Naive thymus-derived CD4-positive, alpha-beta T cell (primary cell): ENCODE measurements at regions of chr1 and their contacts with region 1.

Region 1: DNA sequence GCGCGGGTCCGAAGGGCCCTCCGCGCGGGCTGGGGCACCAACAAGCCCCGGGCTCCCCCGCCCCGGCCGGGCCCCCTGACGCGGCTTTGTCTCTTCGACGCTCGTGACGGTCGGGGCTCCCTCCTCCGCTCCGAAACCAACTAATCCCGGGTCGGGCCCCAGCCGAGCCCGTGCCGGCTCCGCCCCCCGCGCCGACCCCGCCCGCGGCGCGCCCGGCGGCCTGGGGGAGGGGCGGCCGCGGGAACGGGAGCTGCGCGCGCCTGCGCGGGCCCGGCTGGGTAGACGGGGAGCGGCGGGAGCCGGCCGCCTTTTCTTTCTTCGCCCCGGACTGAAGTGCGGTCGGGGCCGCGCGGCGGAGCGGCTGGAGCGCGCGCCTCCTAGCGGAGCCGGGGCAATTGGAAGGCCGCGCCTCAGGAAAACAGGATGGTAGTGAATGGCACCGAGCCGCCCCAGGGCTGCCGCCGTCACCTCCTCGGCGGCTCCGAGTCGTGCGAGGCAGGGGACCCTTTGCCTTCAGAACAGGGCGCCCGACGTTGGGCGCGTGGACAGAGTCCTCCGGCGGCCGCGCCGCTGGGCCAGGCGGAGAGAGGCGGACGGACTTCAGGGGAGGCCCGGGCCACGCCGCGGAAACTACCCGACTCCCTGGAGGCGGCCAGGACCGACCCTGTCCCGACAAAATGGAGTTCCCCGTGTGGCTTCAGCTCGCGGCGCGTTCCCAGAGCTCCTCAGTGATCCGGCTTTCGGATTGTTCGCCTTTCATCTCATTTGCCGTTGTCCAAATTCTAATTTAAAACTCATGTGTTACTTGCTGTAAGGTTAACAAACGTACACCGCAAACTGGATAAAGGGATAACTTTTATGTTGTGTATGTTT is at the start of gene TP53BP2:
- DNase-seq: peak; percentile 86 to 95 (median 90)
- ATAC-seq: peak; percentile 92
- H3K4me3 ChIP-seq: peak within 1 kb of the TSS; percentile 84
- H3K4me3 Mint-ChIP-seq: peak within 1 kb of the TSS; percentile 88 to 99 (median 96)
- H3K27ac ChIP-seq: peak within 1 kb of the TSS; percentile 99
- H3K27ac Mint-ChIP-seq: peak within 1 kb of the TSS; percentile 94 to 99 (median 98)
- H3K4me1 ChIP-seq: peaks cover 14 to 27% of the 10 kb centered on the region in 2 donors
- H3K4me1 Mint-ChIP-seq: peaks cover 23 to 53% (median 40%) of the 10 kb centered on the region in 7 donors
- H3K27me3 ChIP-seq: no peaks in the 10 kb centered on the region
- H3K27me3 Mint-ChIP-seq: peaks cover 0 to 4% (median under 1%) of the 10 kb centered on the region in 5 donors
- total RNA-seq, gene TP53BP2: 30.3 to 120 (median 45.4) TPM

Region 2: GRCh38 chr1:222643938-222644635 is 1202.0 kb before region 1 on chr1:
- CTCF ChIA-PET with region 1: no interaction called
- POLR2A ChIA-PET with region 1: no interaction called
- intact Hi-C with region 1: loop called in 1 of 2 experiments (anchors 5 kb)
- DNase-seq: peak; percentile 93 to 98 (median 96)
- ATAC-seq: peak; percentile 97
- H3K4me3 ChIP-seq: peak overlapping the region; percentile 99
- H3K4me3 Mint-ChIP-seq: peak overlapping the region; percentile 87 to 99 (median 97)
- H3K27ac ChIP-seq: peak overlapping the region; percentile 92
- H3K27ac Mint-ChIP-seq: peak overlapping the region; percentile 95 to 99 (median 98)
- H3K4me1 ChIP-seq: peaks cover 12% of the 10 kb centered on the region in 2 donors
- H3K4me1 Mint-ChIP-seq: peaks cover 12 to 59% (median 49%) of the 10 kb centered on the region in 7 donors
- H3K27me3 ChIP-seq: no peaks in the 10 kb centered on the region
- H3K27me3 Mint-ChIP-seq: no peaks in the 10 kb centered on the region

Region 3: GRCh38 chr1:223695941-223696340 is 150.1 kb before region 1 on chr1:
- CTCF ChIA-PET with region 1: interaction called, 4 read pairs
- POLR2A ChIA-PET with region 1: interaction called, 4 read pairs
- intact Hi-C with region 1: loop called in 1 of 2 experiments (anchors 5 kb)
- DNase-seq: no peak
- ATAC-seq: no peak
- H3K4me3 ChIP-seq: no peak overlapping the region
- H3K4me3 Mint-ChIP-seq: no peak overlapping the region
- H3K27ac ChIP-seq: no peak overlapping the region
- H3K27ac Mint-ChIP-seq: no peak overlapping the region
- H3K4me1 ChIP-seq: no peaks in the 10 kb centered on the region
- H3K4me1 Mint-ChIP-seq: peaks cover 0 to 11% (median 6%) of the 10 kb centered on the region in 7 donors
- H3K27me3 ChIP-seq: no peaks in the 10 kb centered on the region
- H3K27me3 Mint-ChIP-seq: peaks cover 0 to 5% (median 0%) of the 10 kb centered on the region in 5 donors

Region 4: DNA sequence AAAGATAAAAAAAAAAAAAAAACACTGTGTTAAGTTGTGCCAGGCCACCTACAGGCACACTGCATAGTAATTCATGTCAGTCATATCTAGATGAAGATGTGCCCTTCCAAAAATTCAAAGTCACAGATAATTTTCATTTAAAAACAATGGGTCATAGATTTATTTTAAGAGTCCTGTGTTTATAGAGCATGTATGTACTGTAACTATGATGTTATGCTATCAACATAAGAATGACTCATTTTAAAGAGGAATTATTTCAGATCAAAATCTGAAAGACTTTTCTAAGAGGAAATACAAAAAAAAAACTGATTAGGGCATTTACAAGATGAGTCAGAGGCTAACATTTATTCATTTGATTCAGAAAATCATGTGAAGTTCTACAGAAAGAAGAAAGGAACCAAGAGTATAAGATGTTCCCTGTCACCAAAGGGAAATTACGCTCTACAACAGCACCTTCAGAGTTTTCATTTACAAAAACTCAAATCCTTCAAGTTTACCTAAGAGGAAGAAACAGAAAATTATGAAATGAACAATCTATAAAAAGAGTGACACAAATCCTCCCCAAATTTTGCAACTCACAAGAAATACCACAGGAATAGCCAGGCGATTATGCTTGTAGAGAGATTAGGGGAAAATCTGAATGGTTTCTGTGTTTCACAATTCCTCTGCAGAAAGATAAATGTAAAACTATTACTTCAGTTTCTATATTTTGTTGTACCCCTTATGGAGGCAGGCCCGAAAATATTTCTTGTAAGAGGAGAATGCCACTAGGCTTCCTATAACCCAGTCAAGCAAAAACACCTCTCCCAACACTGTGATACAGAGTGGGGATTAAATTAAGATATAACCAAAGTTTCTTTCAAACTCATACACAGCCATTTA is 14.1 kb before region 1 on chr1:
- CTCF ChIA-PET with region 1: interaction called, 8 read pairs
- POLR2A ChIA-PET with region 1: interaction called, 51 read pairs
- intact Hi-C with region 1: loop called (anchors 1 kb)
- DNase-seq: peak in 1 of 9 donors; percentile 36
- ATAC-seq: peak; percentile 77
- H3K4me3 ChIP-seq: no peak overlapping the region
- H3K4me3 Mint-ChIP-seq: peak overlapping the region in 9 of 10 donors; percentile 16 to 69 (median 60)
- H3K27ac ChIP-seq: peak overlapping the region; percentile 11
- H3K27ac Mint-ChIP-seq: peak overlapping the region in 6 of 9 donors; percentile 76 to 93 (median 82)
- H3K4me1 ChIP-seq: peaks cover 46 to 47% of the 10 kb centered on the region in 2 donors
- H3K4me1 Mint-ChIP-seq: peaks cover 12 to 28% (median 22%) of the 10 kb centered on the region in 7 donors
- H3K27me3 ChIP-seq: no peaks in the 10 kb centered on the region
- H3K27me3 Mint-ChIP-seq: no peaks in the 10 kb centered on the region

Region 5: GRCh38 chr1:224182866-224183590 is 337.0 kb after region 1 on chr1 and contains the start of gene DEGS1:
- CTCF ChIA-PET with region 1: no interaction called
- POLR2A ChIA-PET with region 1: no interaction called
- intact Hi-C with region 1: loop called (anchors 2 to 5 kb)
- DNase-seq: peak; percentile 77 to 86 (median 84)
- ATAC-seq: peak; percentile 91
- H3K4me3 ChIP-seq: peak within 1 kb of the TSS; percentile 76
- H3K4me3 Mint-ChIP-seq: peak within 1 kb of the TSS; percentile 78 to 95 (median 90)
- H3K27ac ChIP-seq: peak within 1 kb of the TSS; percentile 92
- H3K27ac Mint-ChIP-seq: peak within 1 kb of the TSS; percentile 90 to 96 (median 93)
- H3K4me1 ChIP-seq: peaks cover 20 to 28% of the 10 kb centered on the region in 2 donors
- H3K4me1 Mint-ChIP-seq: peaks cover 35 to 56% (median 53%) of the 10 kb centered on the region in 7 donors
- H3K27me3 ChIP-seq: no peaks in the 10 kb centered on the region
- H3K27me3 Mint-ChIP-seq: no peaks in the 10 kb centered on the region
- total RNA-seq, gene DEGS1: 35.4 to 86.0 (median 38.3) TPM

Region 6: DNA sequence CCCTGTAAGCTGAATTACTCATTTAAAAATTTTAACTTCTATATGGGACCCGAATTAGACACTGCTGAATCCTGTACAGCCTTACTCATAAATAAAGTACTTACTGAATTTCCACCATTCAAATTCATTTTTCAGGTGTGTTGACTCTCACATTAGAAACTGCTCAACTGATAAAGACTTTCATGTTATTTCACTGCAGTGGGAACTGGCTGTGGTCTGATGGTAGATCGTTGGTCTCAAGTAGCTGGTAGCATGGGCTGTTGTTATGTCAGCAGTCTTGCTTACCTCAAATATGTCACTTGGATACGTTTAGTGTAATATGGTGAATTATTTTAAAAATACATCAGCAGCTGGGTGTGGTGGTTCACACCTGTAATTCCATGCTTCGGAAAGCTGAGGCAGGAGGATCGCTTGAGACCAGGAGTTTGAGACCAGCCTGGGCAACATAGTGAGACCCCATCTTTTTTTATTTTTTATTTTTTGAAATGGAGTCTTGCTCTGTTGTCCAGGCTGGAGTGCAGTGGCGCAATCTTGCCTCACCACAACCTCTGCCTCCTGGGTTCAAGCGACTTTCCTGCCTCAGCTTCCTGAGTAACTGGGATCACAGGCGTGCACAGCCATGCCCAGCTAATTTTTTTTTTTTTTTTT is 347.4 kb after region 1 on chr1:
- CTCF ChIA-PET with region 1: no interaction called
- POLR2A ChIA-PET with region 1: no interaction called
- intact Hi-C with region 1: no loop called
- DNase-seq: no peak
- ATAC-seq: no peak
- H3K4me3 ChIP-seq: no peak overlapping the region
- H3K4me3 Mint-ChIP-seq: no peak overlapping the region
- H3K27ac ChIP-seq: no peak overlapping the region
- H3K27ac Mint-ChIP-seq: peak overlapping the region in 2 of 9 donors; percentile 30 to 54
- H3K4me1 ChIP-seq: peaks cover 0 to 3% of the 10 kb centered on the region in 2 donors
- H3K4me1 Mint-ChIP-seq: peaks cover 10 to 31% (median 16%) of the 10 kb centered on the region in 7 donors
- H3K27me3 ChIP-seq: no peaks in the 10 kb centered on the region
- H3K27me3 Mint-ChIP-seq: no peaks in the 10 kb centered on the region

Region 7: GRCh38 chr1:224434691-224435317 is 588.8 kb after region 1 on chr1 and contains the start of gene WDR26:
- CTCF ChIA-PET with region 1: no interaction called
- POLR2A ChIA-PET with region 1: no interaction called
- intact Hi-C with region 1: loop called (anchors 10 kb)
- DNase-seq: peak; percentile 67 to 91 (median 86)
- ATAC-seq: peak; percentile 90
- H3K4me3 ChIP-seq: peak within 1 kb of the TSS; percentile 93
- H3K4me3 Mint-ChIP-seq: peak within 1 kb of the TSS; percentile 84 to 99 (median 96)
- H3K27ac ChIP-seq: peak within 1 kb of the TSS; percentile 97
- H3K27ac Mint-ChIP-seq: peak within 1 kb of the TSS; percentile 92 to 99 (median 97)
- H3K4me1 ChIP-seq: peaks cover 27 to 30% of the 10 kb centered on the region in 2 donors
- H3K4me1 Mint-ChIP-seq: peaks cover 42 to 63% (median 59%) of the 10 kb centered on the region in 7 donors
- H3K27me3 ChIP-seq: no peaks in the 10 kb centered on the region
- H3K27me3 Mint-ChIP-seq: no peaks in the 10 kb centered on the region
- total RNA-seq, gene WDR26: 80.5 to 164 (median 104) TPM